Esophagus muscularis mucosa (tissue), 4 donors: ENCODE measurements at regions of chr11 and their contacts with region 1.

Region 1: DNA sequence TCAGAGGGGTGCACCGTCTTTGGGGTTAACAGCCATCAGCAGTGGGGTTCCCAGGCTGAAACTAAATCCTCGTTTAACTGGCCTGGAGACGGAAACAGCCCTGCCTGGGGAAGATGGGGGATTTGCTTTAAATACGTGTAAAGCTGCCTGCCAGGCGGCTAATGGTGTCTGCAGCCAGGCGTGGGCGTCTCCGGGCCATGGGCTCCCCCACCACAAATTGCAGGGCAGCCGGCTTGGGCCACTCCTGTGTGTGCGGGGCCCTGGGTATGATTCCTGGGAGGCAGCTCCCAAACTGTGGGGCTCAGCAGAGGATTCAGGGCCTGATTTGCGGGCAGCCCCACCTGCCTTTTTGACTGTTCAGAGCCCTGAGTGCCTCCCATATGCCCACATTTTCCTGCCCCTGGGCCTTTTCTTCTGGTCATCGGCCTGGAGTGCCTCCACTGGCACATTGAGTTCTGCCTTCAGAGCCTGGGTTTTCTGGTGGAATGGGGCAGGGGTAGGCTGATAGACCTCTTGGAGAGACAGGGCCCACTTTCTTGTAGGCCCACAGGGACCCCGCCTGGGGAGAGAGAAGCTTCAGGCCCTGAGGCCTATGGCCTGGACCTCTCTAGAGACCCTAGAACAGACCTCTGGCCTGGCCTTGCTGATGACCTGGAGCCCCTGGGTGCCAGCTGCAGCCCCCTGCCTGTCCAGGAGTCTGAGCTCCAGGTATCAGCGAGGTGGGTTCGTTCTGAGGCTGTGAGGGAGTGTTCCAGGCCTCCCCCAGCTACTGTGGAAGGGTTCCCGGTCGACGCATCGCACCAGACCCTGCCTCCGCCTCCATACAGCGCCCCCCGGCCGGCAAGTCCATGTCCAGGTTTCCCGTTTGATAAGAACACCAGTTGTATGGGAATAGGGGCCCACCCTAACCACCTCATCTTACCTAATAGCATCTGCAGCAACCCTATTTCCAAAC is 110.8 kb downstream of the KCNQ1 start:
- DNase-seq: no peak
- H3K4me3 ChIP-seq: no peak overlapping the region
- H3K27ac ChIP-seq: no peak overlapping the region
- H3K4me1 ChIP-seq: peaks cover 0 to 1% (median under 1%) of the 10 kb centered on the region in 4 donors
- H3K27me3 ChIP-seq: peaks cover 0 to 2% (median 0%) of the 10 kb centered on the region in 4 donors
- CTCF ChIP-seq: no peak
- EP300 ChIP-seq: no peak
- POLR2A ChIP-seq: no peak

Region 2: DNA sequence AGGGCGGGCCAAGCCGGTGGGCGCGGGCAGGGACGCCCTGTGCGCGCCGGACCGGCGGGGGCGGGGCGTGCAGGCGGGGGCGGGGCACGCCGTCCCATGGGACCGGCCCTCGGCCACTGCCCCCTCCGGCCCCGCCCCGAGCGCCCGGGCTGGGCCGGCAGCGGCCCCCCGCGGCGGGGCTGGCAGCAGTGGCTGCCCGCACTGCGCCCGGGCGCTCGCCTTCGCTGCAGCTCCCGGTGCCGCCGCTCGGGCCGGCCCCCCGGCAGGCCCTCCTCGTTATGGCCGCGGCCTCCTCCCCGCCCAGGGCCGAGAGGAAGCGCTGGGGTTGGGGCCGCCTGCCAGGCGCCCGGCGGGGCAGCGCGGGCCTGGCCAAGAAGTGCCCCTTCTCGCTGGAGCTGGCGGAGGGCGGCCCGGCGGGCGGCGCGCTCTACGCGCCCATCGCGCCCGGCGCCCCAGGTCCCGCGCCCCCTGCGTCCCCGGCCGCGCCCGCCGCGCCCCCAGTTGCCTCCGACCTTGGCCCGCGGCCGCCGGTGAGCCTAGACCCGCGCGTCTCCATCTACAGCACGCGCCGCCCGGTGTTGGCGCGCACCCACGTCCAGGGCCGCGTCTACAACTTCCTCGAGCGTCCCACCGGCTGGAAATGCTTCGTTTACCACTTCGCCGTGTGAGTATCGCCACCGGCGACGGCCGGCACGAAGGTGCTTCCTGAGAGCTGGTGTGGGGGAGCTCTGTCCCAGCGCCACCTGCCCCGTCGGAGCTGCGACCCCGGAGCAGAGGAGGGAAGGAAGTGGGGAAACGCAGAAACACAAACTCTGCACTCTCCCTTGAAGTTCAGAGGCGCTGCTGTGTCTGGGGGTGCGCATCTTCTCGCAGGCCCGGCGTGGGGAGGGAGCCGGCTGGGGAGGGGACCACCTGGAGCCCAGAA is 110.5 kb before region 1 on chr11 and contains the start of gene KCNQ1:
- intact Hi-C with region 1: no loop called
- DNase-seq: no peak
- H3K4me3 ChIP-seq: peak within 1 kb of the TSS; percentile 39 to 60 (median 43)
- H3K27ac ChIP-seq: no peak within 1 kb of the TSS
- H3K4me1 ChIP-seq: peaks cover 25 to 32% (median 30%) of the 10 kb centered on the region in 4 donors
- H3K27me3 ChIP-seq: peaks cover 0 to 93% (median 24%) of the 10 kb centered on the region in 4 donors
- CTCF ChIP-seq: no peak
- EP300 ChIP-seq: no peak
- POLR2A ChIP-seq: no peak
- total RNA-seq, gene KCNQ1: 2.1 to 5.9 (median 4.3) TPM

Region 3: DNA sequence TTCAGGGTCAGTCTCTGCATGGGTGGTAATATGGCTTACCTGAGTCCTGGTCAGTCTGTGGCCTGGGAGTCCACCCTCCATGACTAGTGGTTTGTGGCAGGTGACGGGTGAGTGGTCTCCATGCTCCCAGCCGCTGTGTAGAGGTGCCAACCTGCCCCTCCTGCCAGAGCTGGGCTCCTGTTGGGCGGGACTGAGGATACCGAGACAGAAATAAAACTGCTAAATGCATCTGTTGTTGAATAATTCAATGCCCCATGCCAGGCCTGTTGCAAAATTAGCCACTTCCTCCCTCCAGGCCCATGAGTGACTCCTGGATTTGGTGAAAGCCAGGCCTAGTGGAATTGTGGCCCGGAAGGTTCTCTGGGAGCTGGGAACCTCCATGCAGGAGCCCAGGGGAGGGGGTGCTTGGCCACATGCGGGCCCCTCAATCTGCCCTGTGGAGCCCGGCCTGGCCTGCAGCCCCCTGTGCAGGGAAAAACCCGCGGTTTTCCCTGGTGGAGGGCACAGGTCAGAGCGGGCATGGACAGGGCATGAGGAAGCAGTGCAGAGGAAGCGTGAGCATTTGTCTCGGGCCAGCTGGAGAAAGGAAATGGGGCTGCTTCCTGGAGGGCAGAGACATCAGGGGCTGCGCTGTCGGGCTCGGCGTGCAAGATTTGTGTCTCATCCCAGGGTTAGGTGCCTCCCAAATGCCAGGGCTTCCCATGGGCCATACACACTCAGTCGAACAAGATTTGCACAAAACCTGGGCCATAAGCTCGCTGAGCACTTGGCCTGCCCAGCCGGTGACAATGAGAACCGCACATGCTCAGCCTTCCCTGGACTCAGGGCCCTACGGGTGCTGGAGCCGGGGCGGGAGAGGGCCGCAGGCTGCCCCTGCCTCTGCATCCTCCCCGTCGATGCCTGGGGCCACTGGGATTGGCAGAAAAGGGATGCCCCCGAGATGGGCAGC is 43.9 kb before region 1 on chr11:
- intact Hi-C with region 1: no loop called
- DNase-seq: peak; percentile 92
- H3K4me3 ChIP-seq: no peak overlapping the region
- H3K27ac ChIP-seq: peak overlapping the region in 2 of 4 donors; percentile 10 to 49
- H3K4me1 ChIP-seq: peaks cover 15 to 42% (median 18%) of the 10 kb centered on the region in 4 donors
- H3K27me3 ChIP-seq: peaks cover 0 to 38% (median 0%) of the 10 kb centered on the region in 4 donors
- CTCF ChIP-seq: no peak
- EP300 ChIP-seq: no peak
- POLR2A ChIP-seq: no peak

Region 4: GRCh38 chr11:2612884-2613571 is 57.4 kb after region 1 on chr11:
- intact Hi-C with region 1: loop called (anchors 2 kb)
- DNase-seq: no peak
- H3K4me3 ChIP-seq: no peak overlapping the region
- H3K27ac ChIP-seq: no peak overlapping the region
- H3K4me1 ChIP-seq: no peaks in the 10 kb centered on the region
- H3K27me3 ChIP-seq: no peaks in the 10 kb centered on the region
- CTCF ChIP-seq: no peak
- EP300 ChIP-seq: no peak
- POLR2A ChIP-seq: no peak